Left ventricle myocardium superior (tissue), 1 donor: ENCODE measurements at regions of chr14 and their contacts with region 1.

Region 1: DNA sequence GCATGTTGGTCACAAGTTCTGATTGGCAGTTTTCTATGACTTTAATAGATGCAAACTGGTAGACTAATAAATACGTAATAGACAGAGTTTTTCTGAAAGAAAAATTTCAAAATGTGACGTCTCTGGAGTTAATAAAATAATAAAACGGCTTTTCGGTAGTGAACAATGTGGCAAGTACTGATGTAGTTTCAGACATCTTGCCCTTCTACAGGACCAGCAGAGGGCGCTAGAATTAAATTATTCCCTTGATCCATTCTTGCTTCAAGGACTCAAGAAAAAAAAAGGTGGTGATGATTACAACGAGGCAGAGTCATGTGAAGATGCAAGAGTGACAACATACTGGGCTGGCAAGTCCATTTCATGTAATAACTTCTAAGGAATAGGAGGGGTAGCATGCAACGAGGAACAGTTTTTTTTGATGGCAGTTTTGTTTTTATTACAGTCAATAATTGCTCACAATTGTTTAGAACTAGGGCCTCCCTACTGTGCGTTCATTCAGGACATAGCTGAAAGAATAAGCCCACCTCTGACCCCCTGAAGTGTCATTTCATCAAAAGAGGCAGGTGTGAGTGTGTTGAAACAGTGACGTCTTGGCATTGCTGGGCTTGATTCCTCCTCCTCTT is 101.0 kb upstream of the GZMB start:
- DNase-seq: peak; percentile 16
- ATAC-seq: peak; percentile 70

Region 2: DNA sequence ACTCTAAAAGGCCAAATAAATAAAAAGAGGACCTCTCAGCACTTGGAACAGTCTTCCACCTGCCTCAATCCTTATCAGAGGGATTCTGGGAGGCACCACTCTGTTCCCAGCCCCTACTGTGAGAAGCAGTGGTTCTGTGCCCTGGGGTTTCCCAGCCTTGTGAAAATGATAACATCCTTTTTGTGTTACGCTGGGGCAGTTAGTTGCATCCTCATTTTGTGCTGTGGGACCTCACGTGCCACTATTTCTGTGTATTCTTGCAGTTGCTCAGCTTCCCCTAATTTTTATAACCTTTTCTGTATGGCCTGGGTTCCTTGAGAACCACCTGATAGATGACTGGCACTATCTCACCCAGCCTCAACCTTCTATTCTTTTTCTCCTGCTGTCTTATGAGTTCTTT is 216.1 kb before region 1 on chr14:
- intact Hi-C with region 1: no loop called
- DNase-seq: no peak
- ATAC-seq: no peak

Region 3: DNA sequence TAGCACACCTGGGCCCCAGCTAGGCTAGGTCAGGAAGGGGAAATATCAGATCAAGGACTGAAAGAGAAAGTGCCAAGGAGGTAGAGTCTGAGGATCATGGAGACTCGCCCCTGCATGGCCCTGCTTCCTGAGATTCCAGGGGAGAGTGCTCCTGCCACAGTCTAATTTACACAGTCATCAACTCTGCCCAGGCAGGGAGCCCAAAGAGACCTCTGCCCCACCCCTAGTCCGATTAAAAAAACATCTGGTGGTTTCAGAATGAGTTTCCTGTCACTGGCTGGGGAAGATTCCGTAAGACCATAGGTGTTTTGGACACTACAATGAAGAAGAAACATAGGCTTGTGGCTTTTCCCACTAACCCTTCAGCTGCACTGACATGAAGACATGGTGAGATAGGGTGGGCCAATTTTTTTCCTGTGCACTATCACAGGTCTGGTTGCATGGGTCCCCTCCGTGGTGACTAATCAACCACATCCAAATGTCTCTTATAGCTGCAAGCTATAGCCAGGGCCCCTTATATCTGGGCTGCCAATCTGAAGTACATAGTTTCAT is 69.5 kb before region 1 on chr14:
- intact Hi-C with region 1: no loop called
- DNase-seq: no peak
- ATAC-seq: peak; percentile 25

Region 4: GRCh38 chr14:24789378-24789884 is 54.4 kb after region 1 on chr14:
- intact Hi-C with region 1: loop called (anchors 10 kb)
- DNase-seq: no peak
- ATAC-seq: peak; percentile 76

Region 5: DNA sequence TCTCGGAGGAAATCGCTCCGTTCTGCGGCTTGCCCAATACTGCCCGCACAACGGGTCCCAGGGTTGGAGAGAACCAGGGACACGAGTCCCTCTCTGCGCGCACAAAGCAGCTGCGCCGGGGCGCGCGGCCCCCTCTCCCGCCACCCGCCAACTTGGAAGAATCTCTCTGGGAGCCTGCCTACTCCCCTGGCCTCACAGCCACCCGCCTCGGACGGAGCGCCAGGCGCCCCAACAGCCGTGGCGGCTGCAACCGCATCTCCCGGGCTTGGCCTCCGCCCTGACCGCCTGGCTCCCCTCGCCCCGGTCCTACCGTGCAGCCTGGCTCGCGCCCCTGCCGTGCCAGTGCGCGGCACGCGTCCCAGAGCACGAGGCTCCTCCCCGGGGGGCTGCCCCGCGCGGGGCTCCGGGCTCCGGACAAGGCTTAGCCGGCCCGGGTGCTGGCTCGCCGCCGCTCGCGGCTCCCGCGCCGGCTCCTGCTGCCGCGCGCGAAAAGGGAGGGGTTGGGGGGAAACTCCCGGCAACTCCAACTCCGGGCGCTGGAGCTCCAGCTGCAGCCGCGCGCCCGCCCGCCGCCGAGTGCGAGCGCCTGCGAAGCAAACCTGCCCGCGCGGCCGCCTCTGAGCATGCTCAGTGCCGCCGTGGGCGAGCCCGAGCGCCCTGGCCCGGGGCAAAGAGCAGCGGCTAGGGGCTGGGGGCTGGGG is 314.7 kb after region 1 on chr14 and contains the start of gene STXBP6:
- intact Hi-C with region 1: loop called (anchors 10 kb)
- DNase-seq: peak; percentile 91
- ATAC-seq: peak; percentile 91
- total RNA-seq, gene STXBP6: 43.5 TPM

Region 6: DNA sequence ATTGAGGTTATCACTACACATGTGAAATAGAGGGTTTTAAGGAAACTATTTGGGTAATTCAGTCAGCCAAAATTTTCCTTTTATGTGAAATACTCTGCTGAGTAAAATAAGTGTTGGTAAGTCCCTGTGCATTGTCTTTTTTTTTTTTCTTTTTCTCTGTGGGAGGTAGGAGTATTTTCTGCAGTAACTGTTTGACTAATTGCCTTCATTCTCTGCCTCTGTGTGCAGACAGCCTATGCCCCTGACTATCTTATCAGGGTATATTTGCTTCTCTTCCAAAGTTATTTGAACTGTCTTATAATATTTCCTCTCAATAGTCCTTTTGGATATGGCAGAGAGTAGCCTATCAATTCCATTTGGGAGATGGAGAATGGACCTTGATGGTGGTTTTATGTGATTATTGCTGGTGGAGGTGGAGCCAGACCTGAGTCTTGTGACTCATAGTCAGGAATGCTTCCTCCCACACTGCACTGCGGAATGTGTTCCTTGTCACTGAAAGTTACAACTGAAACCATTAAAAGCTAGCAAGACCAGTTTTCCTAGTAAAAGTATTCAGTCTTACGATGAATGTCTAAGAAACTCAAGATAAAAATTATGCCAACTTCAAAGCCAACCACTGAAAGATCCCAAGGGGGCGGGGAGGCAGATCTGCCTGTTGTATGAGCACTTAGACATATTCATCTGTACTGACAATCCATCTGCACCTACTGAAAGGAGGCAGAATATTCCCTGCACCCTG is 355.9 kb after region 1 on chr14:
- intact Hi-C with region 1: no loop called
- DNase-seq: no peak
- ATAC-seq: no peak

Region 7: DNA sequence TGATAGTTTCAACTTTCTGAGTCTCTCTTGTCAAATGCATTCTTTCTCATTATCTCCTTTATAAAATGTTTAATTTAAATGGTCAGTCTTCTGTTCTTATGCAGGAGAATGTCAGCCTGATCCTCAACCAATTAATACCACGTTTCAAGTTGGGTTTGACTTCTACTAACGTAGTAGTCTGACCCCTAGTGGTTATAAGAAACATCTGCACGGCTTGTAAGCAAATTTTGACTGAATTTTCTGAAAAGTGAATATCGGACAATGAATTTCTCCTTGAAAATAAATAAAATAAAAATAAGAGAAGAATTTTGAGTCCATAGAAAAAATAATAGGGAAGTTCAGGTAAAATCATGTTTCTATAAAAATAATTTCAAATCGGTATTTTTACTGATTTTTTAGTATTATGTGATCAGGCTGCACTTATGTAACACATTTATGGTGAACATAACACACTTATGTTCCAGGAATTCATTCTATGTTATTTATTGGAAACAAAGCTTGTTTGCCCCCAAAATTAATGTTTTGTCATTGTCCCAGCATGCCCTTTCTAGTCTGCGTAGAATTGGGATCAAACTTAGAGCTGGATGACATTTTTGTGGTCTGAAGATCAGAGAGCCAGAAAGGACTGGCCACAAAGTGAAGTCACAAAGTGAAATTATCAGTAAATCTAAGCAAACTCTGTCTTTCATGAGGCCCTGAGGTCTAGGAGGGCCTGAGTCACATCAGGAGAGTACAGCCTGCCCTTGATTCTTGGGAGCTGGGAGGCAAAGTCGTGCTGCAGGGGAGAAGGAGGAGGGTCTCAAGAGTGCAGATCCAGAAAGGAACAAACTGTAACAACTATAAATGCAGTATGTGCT is 416.2 kb after region 1 on chr14:
- intact Hi-C with region 1: loop called (anchors 5 kb)
- DNase-seq: no peak
- ATAC-seq: no peak